Right cardiac atrium (tissue), 5 donors: ENCODE measurements at regions of chr10 and their contacts with region 1.

Region 1: GRCh38 chr10:14959276-14960057 is at the start of gene MEIG1:
- DNase-seq: peak; percentile 93 to 97 (median 97)
- ATAC-seq: peak; percentile 99
- H3K4me3 ChIP-seq: peak within 1 kb of the TSS; percentile 57
- H3K27ac ChIP-seq: peak within 1 kb of the TSS; percentile 90
- H3K4me1 ChIP-seq: no peaks in the 10 kb centered on the region
- H3K27me3 ChIP-seq: no peaks in the 10 kb centered on the region
- total RNA-seq, gene MEIG1: not detected

Region 2: GRCh38 chr10:14787938-14788337 is 171.5 kb before region 1 on chr10:
- intact Hi-C with region 1: no loop called
- DNase-seq: no peak
- ATAC-seq: no peak
- H3K4me3 ChIP-seq: no peak overlapping the region
- H3K27ac ChIP-seq: no peak overlapping the region
- H3K4me1 ChIP-seq: no peaks in the 10 kb centered on the region
- H3K27me3 ChIP-seq: no peaks in the 10 kb centered on the region

Region 3: GRCh38 chr10:14826076-14826829 is 133.2 kb before region 1 on chr10:
- intact Hi-C with region 1: no loop called
- DNase-seq: no peak
- ATAC-seq: no peak
- H3K4me3 ChIP-seq: no peak overlapping the region
- H3K27ac ChIP-seq: no peak overlapping the region
- H3K4me1 ChIP-seq: no peaks in the 10 kb centered on the region
- H3K27me3 ChIP-seq: no peaks in the 10 kb centered on the region

Region 4: DNA sequence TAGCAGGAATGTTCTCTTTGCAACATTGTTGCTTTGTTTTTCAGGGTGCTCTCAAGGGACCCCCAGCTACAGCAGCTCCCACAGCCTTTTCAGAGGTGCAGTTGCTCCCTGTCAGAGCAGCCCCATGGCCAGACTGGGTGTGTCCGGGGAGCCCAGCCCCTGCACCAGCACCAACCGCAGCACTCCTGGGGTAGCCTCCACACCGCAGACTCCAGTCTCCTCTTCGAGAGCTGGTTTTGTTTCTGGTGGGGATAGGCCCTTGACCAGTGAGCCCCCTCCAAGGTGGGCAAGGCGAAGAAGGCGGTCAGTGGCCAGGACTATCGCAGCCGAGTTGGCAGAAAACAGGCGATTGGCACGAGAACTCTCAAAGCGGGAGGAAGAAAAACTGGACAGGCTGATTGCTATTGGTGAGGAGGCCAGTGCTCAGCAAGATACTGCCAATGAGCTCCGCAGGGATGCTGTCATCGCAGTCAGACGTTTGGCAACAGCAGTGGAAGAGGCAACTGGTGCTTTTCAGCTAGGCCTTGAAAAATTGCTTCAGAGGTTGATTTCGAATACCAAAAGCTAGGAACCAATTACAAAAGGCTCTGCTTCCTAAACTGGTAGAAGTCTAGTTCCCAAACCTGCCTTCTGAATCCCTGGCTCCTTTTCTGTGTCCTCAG is 116.0 kb before region 1 on chr10:
- intact Hi-C with region 1: loop called in 1 of 4 experiments (anchors 10 kb)
- DNase-seq: peak in 1 of 3 donors; percentile 34
- ATAC-seq: no peak
- H3K4me3 ChIP-seq: no peak overlapping the region
- H3K27ac ChIP-seq: no peak overlapping the region
- H3K4me1 ChIP-seq: no peaks in the 10 kb centered on the region
- H3K27me3 ChIP-seq: no peaks in the 10 kb centered on the region

Region 5: GRCh38 chr10:15067154-15067553 is 107.7 kb after region 1 on chr10:
- intact Hi-C with region 1: no loop called
- DNase-seq: no peak
- ATAC-seq: no peak
- H3K4me3 ChIP-seq: no peak overlapping the region
- H3K27ac ChIP-seq: no peak overlapping the region
- H3K4me1 ChIP-seq: no peaks in the 10 kb centered on the region
- H3K27me3 ChIP-seq: no peaks in the 10 kb centered on the region

Region 6: DNA sequence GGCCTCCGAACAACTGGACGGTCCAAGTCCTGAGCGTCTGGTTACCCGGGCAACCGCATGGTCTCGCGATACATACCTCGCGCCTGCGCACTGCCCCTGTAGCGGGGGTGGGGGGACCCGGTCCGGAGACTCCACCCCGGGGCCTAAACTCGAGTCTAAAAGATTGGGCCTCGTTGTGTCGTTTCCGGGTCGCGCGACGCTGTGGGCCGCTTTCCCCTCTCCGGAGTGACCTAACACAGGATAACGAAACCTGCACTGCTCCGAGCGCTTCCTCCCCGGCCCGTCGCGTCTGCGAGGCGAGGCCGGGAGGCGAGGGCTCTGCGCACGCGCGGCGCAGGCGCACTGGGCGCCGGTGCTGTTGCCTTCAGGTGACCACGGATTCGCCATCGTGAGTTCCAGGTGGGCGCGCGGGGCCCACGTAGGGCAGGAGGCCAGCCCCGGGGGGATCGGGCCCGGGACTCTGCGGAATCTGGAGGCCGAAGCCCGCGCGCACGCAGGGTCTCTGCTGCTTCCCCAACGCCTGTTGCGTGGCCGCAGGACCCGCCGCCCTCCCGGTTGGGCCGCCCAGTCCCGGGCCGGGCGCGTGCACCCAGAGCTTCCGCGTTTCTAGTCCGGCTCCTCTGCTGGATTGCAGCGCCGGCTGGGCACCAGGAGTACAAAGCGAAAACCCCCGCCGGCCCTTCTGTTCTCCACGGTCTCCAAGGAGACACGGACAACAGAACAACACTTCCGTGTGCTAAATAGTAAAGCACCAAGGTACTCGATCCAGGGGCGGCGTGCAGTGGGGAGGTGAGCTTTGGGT is 137.7 kb after region 1 on chr10 and contains the start of gene RPP38:
- intact Hi-C with region 1: loop called in 1 of 4 experiments (anchors 10 kb)
- DNase-seq: peak; percentile 97 to 99 (median 98)
- ATAC-seq: peak; percentile 98
- H3K4me3 ChIP-seq: peak within 1 kb of the TSS; percentile 83
- H3K27ac ChIP-seq: peak within 1 kb of the TSS; percentile 96
- H3K4me1 ChIP-seq: peaks cover 4% of the 10 kb centered on the region
- H3K27me3 ChIP-seq: no peaks in the 10 kb centered on the region
- total RNA-seq, gene RPP38: 8.3 to 12.2 (median 9.8) TPM